OCI-LY7 (cell line): ENCODE measurements at regions of chr12 and their contacts with region 1.

Region 1: DNA sequence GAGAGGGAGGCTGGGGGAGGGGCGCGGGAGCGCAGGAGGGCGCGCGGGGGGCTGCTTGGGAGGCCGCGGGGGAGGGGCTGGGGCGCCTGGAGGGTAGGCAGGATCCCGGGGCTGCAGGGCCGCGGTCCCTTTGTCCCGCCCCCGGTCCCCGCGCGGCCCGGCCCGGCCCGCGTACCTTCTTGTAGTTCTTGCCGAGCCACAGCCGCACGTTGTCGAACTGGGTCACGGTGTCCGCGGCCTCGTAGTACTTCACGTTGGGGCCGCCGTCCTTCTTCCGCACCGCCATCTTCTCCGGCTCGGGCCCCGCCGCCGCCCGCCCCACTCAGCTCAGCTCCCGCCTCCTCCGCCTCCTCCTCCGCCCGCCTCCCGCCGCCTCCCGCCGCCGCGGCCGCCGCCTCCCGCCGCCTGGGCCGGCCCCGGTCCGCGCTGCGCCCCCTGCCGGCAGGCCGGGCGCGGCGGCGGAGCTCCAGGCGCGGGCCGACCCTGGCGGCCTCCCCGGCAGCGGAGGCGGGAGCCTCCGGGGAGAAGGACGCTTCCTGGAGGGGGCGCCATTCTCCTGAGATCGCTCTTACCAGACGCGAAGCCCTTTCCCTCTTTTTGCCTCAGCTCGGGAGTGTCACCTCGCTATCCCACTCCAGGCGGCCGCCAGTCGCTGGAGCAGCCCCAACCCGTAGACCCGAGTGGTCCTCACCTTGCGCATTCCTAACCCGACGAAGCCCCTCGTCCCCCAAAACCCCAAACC is at the start of gene SMARCC2:
- DNase-seq: peak; percentile 90
- H3K4me3 ChIP-seq: peak within 1 kb of the TSS; percentile 79
- H3K27ac ChIP-seq: peak within 1 kb of the TSS; percentile 72
- H3K4me1 ChIP-seq: peaks cover 40% of the 10 kb centered on the region
- CTCF ChIP-seq: peak; percentile 77
- total RNA-seq, gene SMARCC2: 59.7 and 68.3 TPM in 2 replicates

Region 2: GRCh38 chr12:56007564-56008559 is 181.5 kb before region 1 on chr12:
- CTCF ChIA-PET with region 1: no interaction called
- POLR2A ChIA-PET with region 1: no interaction called
- intact Hi-C with region 1: no loop called
- DNase-seq: peak; percentile 76
- H3K4me3 ChIP-seq: peak overlapping the region; percentile 77
- H3K27ac ChIP-seq: peak overlapping the region; percentile 66
- H3K4me1 ChIP-seq: peaks cover 9% of the 10 kb centered on the region
- CTCF ChIP-seq: no peak

Region 3: GRCh38 chr12:56117778-56118687 is 71.3 kb before region 1 on chr12 and contains the start of gene ZC3H10:
- CTCF ChIA-PET with region 1: interaction called, 23 read pairs
- POLR2A ChIA-PET with region 1: interaction called, 21 read pairs
- intact Hi-C with region 1: loop called (anchors 1 kb)
- DNase-seq: peak; percentile 100
- H3K4me3 ChIP-seq: peak within 1 kb of the TSS; percentile 91
- H3K27ac ChIP-seq: peak within 1 kb of the TSS; percentile 94
- H3K4me1 ChIP-seq: peaks cover 26% of the 10 kb centered on the region
- CTCF ChIP-seq: peak; percentile 64
- total RNA-seq, gene ZC3H10: 11.9 and 12.6 TPM in 2 replicates

Region 4: DNA sequence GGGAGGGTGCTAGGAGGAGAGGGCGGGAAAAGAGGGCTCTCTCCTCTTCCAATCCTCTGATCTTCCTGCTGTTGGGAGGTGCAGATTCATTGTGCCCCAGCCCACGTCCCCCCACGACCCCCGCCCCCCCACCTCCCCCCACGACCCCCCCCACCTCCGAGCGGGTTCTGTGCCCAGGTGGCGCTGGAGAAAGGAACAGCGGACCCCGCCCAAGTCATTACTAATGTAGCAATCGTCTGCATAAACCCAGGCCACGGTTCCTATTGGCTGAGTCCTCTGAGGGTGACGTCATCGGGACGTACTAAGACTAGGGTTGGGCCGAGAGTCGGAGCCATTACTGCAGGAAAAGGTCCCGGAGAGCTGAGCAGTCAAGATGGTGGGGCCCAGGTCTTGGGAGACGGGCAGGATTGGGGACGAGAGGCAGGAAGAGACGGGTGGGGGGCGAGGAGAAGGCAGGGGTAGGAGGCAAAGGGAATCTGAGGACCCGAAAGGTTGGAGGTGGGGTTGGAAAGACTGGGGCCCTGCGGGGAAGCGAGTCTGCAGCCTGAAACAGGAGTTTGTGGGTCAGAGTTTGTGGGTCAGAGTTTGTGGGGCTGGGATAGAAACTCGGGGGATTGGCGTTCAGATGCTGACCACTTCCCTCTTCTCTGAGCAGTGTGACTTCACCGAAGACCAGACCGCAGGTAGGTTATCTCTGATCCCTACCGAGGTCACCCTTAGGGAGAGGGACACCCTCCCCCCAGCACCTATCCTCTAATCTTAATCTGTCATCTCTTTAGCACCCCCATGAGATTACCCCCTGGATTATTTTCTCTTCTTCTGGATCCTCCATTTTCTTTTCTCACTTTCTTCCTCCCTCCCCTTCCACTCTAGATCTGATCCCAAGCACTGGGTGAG is 31.1 kb before region 1 on chr12 and contains the start of gene MYL6:
- CTCF ChIA-PET with region 1: interaction called, 5 read pairs
- POLR2A ChIA-PET with region 1: interaction called, 3 read pairs
- intact Hi-C with region 1: loop called (anchors 2 kb)
- DNase-seq: peak; percentile 99
- H3K4me3 ChIP-seq: peak within 1 kb of the TSS; percentile 98
- H3K27ac ChIP-seq: peak within 1 kb of the TSS; percentile 82
- H3K4me1 ChIP-seq: peaks cover 45% of the 10 kb centered on the region
- CTCF ChIP-seq: 0 out of 2 replicates have a peak, but pooled peaks have one; percentile 3
- total RNA-seq, gene MYL6: 574 and 654 TPM in 2 replicates

Region 5: GRCh38 chr12:56258057-56258819 is 68.9 kb after region 1 on chr12 and contains the start of gene ANKRD52:
- CTCF ChIA-PET with region 1: interaction called, 12 read pairs
- POLR2A ChIA-PET with region 1: interaction called, 4 read pairs
- intact Hi-C with region 1: loop called (anchors 1 kb)
- DNase-seq: peak; percentile 87
- H3K4me3 ChIP-seq: peak within 1 kb of the TSS; percentile 93
- H3K27ac ChIP-seq: peak within 1 kb of the TSS; percentile 34
- H3K4me1 ChIP-seq: peaks cover 17% of the 10 kb centered on the region
- CTCF ChIP-seq: peak; percentile 73
- total RNA-seq, gene ANKRD52: 7.0 and 11.7 TPM in 2 replicates

Region 6: GRCh38 chr12:56468216-56469006 is 279.1 kb after region 1 on chr12 and contains the start of gene SPRYD4:
- CTCF ChIA-PET with region 1: interaction called, 3 read pairs
- POLR2A ChIA-PET with region 1: no interaction called
- intact Hi-C with region 1: loop called (anchors 1 kb)
- DNase-seq: peak; percentile 97
- H3K4me3 ChIP-seq: peak within 1 kb of the TSS; percentile 89
- H3K27ac ChIP-seq: peak within 1 kb of the TSS; percentile 76
- H3K4me1 ChIP-seq: peaks cover 22% of the 10 kb centered on the region
- CTCF ChIP-seq: peak; percentile 75
- total RNA-seq, gene SPRYD4: 5.3 and 5.9 TPM in 2 replicates